SK-N-SH (cell line): ENCODE measurements at regions of chr17 and their contacts with region 1.

Region 1: GRCh38 chr17:76816590-76817135 is 51.5 kb upstream of the MGAT5B start:
- DNase-seq: peak; percentile 85
- H3K4me3 ChIP-seq: no peak overlapping the region
- H3K27ac ChIP-seq: no peak overlapping the region
- H3K4me1 ChIP-seq: peaks cover 0 to 14% of the 10 kb centered on the region in 2 experiments; a peak in 1 of 4 replicates
- H3K27me3 ChIP-seq: peaks cover 12% of the 10 kb centered on the region; the same call in 1 of the 2 replicates
- CTCF ChIP-seq: peak; percentile 93
- EP300 ChIP-seq: no peak
- RAD21 ChIP-seq: peak; percentile 98

Region 2: DNA sequence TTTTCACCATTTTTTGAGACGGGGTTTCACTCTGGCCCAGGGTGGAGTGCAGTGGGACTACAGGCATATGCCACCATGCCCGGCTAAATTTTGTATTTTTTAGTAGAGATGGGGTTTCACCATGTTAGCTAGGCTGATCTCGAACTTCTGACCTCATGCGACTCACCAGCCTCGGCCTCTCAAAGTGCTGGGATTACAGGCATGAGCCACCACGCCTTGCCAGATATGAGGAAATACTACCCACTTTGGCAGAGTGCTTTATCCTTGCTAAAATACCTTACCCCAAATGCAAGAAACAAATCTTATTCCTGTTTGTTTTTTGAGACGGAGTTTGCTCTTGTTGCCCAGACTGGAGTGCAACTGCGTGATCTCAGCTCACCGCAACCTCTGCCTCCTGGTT is 11.3 kb before region 1 on chr17:
- CTCF ChIA-PET with region 1: interaction called, 17 read pairs
- POLR2A ChIA-PET with region 1: no interaction called
- DNase-seq: no peak
- H3K4me3 ChIP-seq: no peak overlapping the region
- H3K27ac ChIP-seq: no peak overlapping the region
- H3K4me1 ChIP-seq: no peaks in the 10 kb centered on the region
- H3K27me3 ChIP-seq: no peaks in the 10 kb centered on the region
- CTCF ChIP-seq: no peak
- EP300 ChIP-seq: no peak
- RAD21 ChIP-seq: no peak

Region 3: DNA sequence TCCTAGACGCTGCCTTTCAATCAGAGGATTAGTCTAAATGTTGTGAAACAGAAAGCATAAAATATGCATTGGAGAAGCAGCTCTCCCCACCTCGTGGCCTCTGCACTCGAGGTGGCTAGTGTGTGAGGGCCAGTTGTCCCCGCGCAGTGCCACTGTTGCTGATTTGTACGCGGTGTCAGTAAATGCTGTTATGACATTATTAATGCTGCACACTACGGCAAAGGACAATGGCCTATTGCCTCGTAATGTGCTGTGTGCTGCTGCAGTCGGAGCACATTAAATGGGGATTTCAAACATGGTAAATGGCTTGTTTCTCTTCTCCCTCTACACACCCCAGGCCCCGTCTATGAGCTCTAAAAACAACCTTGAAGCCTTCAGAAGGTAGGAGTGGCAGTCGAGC is 45.8 kb after region 1 on chr17:
- CTCF ChIA-PET with region 1: interaction called, 71 read pairs
- POLR2A ChIA-PET with region 1: interaction called, 3 read pairs
- DNase-seq: no peak
- H3K4me3 ChIP-seq: no peak overlapping the region
- H3K27ac ChIP-seq: no peak overlapping the region
- H3K4me1 ChIP-seq: peaks cover 1 to 11% of the 10 kb centered on the region in 2 experiments; a peak in 3 of 4 replicates
- H3K27me3 ChIP-seq: no peaks in the 10 kb centered on the region
- CTCF ChIP-seq: no peak
- EP300 ChIP-seq: no peak
- RAD21 ChIP-seq: no peak

Region 4: DNA sequence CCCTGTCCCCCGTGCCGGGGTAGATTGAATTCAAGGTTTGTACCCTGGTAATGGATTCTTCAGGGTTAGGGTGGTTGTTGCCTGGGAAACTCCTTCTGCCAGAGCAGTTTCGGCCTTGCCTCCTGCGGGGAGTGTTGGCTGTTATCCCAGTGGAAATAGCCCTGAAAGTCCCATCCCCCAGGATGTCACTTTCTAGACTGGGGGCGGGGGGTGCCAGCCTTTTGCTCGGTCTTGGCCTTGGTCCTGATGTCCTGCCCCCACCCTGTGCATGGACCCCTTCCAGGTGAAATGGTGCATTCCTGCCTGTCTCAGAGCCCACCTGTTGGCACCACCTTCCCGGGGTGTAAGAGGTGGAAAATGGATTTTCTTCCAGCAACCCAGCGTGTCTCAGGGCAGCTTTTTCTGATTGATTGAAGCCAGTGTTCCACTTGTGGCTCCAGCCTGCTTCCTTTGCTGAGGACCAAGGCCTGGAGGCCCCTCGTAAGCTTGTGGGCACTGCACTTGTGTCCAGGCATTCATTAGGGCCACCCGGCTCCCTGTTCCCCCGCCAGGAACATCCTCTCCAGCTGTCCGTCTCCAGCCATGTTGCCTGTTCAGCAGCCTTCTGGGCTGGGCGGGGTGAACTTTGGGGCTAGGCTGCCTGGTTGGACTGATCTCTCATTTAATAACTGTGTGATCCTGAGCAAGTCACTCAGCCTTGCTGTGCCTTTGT is 77.1 kb after region 1 on chr17:
- CTCF ChIA-PET with region 1: no interaction called
- POLR2A ChIA-PET with region 1: no interaction called
- DNase-seq: no peak
- H3K4me3 ChIP-seq: no peak overlapping the region
- H3K27ac ChIP-seq: no peak overlapping the region
- H3K4me1 ChIP-seq: no peaks in the 10 kb centered on the region
- H3K27me3 ChIP-seq: no peaks in the 10 kb centered on the region
- CTCF ChIP-seq: no peak
- EP300 ChIP-seq: no peak
- RAD21 ChIP-seq: no peak